ENCODE measurements at regions of chr3 and their contacts with region 1.

Region 1: DNA sequence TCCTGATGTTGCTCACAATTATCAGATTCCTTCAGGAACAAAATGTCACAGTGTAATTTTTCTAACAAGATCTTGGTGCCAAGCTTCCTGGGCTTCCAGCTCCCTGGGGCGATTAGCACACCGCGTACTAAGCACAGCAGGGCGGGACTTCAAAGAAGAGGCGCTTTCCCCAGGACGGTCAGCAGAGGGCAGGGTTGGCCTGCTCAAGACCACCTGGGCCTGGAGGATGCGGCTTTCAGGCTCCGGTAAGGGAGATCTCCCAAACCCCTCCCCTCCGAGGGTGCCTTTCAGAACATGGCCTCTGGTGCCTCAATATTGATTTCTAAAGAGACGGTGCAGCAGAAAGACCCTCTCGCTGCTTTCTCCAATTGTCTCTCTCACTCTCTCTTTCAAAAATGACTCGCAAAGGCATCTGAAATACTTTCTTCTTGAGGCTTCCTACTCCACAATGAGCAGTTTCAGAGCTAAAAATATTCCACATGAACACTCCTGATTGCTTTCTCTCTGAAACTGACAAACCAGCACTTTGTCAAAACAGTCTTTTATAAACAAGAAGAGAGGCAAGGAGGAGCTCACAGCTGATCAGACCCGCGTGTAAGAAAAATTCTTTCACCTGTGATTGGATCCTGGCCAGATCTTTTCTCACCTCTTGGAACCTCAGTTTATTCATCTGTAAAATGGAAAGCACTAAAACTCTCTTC is 154.0 kb downstream of the ADAMTS9 start:
- DNase-seq: peak; percentile 90 to 95 (median 93)
- H3K4me3 ChIP-seq: no peak overlapping the region
- H3K27ac ChIP-seq: no peak overlapping the region
- H3K4me1 ChIP-seq: no peaks in the 10 kb centered on the region
- H3K27me3 ChIP-seq: no peaks in the 10 kb centered on the region
- CTCF ChIP-seq: peak; percentile 88 to 92 (median 89)
- EP300 ChIP-seq: no peak
- POLR2A ChIP-seq: no peak

Region 2: DNA sequence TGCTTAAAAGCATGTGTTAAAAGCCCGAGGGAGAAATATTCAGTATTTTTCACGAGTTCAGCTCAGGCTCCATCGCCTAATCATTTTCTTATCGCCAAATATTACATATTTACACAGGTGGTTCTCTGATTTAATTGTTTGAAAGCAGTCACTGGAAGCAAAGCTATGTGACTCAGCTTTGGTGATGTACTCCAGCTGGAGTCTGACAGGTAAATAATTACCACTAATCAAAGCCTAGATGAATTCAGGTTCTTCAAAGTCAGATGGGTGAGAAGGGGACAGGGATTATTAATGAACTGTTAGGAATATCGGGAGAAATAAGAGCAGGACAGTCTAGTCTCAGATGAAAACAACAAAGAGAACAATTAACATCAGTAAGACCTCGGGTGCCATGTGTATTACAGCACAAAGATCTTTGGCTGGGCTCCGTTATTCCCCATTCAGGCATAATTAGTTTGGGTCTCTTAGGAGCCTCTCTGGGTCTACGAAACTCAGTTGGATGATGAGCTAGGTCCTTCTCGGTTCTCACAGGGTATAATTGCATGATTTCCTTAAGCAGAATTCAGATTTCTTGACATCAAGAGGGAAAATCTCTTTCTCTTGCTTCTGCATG is 485.8 kb after region 1 on chr3:
- intact Hi-C with region 1: loop called in 1 of 4 experiments (anchors 10 kb)
- DNase-seq: no peak
- H3K4me3 ChIP-seq: no peak overlapping the region
- H3K27ac ChIP-seq: peak overlapping the region in 1 of 2 donors; percentile 40
- H3K4me1 ChIP-seq: peaks cover 5% of the 10 kb centered on the region
- H3K27me3 ChIP-seq: no peaks in the 10 kb centered on the region
- CTCF ChIP-seq: no peak
- EP300 ChIP-seq: no peak
- POLR2A ChIP-seq: no peak

Region 3: GRCh38 chr3:65178703-65179102 is 644.9 kb after region 1 on chr3:
- intact Hi-C with region 1: loop called in 2 of 4 experiments (anchors 5 kb)
- DNase-seq: no peak
- H3K4me3 ChIP-seq: no peak overlapping the region
- H3K27ac ChIP-seq: no peak overlapping the region
- H3K4me1 ChIP-seq: peaks cover 2% of the 10 kb centered on the region
- H3K27me3 ChIP-seq: no peaks in the 10 kb centered on the region
- CTCF ChIP-seq: no peak
- EP300 ChIP-seq: no peak
- POLR2A ChIP-seq: no peak

Region 4: GRCh38 chr3:65732051-65732935 is 1198.5 kb after region 1 on chr3:
- intact Hi-C with region 1: loop called in 2 of 4 experiments (anchors 5 kb)
- DNase-seq: peak in 1 of 5 donors; percentile 21
- H3K4me3 ChIP-seq: no peak overlapping the region
- H3K27ac ChIP-seq: no peak overlapping the region
- H3K4me1 ChIP-seq: no peaks in the 10 kb centered on the region
- H3K27me3 ChIP-seq: no peaks in the 10 kb centered on the region
- CTCF ChIP-seq: peak; percentile 49 to 53 (median 52)
- EP300 ChIP-seq: no peak
- POLR2A ChIP-seq: no peak

Measured in ovary (tissue), 10 donors.